IMR-90 (cell line): ENCODE measurements at regions of chr12 and their contacts with region 1.

Region 1: GRCh38 chr12:12171991-12172521 is 94.8 kb downstream of the LRP6 start:
- DNase-seq: peak; percentile 21
- ATAC-seq: no peak
- H3K4me3 ChIP-seq: no peak overlapping the region
- H3K27ac ChIP-seq: no peak overlapping the region
- H3K4me1 ChIP-seq: no peaks in the 10 kb centered on the region; the same call in 1 of the 2 replicates
- H3K27me3 ChIP-seq: no peaks in the 10 kb centered on the region
- CTCF ChIP-seq: no peak
- POLR2A ChIP-seq: no peak
- RAD21 ChIP-seq: no peak

Region 2: DNA sequence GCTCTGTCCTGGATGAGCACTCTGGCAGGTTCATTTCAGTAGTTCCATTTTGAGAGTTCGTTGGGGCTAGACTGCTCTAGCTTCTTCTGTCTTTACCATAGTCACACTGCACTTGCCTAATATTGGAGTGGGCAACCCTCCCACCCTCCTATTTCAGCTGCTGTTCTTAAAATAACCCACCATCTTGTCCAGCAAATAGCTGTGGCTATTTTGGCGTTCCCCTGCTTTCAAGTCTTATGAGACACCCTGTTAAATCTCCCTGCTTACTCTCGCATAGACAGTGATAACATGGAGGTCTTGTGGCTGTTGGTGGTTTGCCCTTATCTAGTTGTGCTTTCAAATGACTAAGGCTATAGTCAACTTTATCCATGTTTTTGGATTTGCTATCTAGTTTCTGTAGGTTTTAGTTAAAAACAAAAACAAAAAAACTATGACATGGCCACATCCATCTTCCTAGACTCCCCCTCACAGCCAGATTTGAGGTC is 29.3 kb after region 1 on chr12:
- CTCF ChIA-PET with region 1: no interaction called
- POLR2A ChIA-PET with region 1: no interaction called
- dilution Hi-C with region 1: no loop called
- in situ Hi-C with region 1: no loop called
- intact Hi-C with region 1: loop called (anchors 1 kb)
- DNase-seq: peak; percentile 65
- ATAC-seq: no peak
- H3K4me3 ChIP-seq: no peak overlapping the region
- H3K27ac ChIP-seq: no peak overlapping the region
- H3K4me1 ChIP-seq: no peaks in the 10 kb centered on the region
- H3K27me3 ChIP-seq: no peaks in the 10 kb centered on the region
- CTCF ChIP-seq: no peak
- POLR2A ChIP-seq: no peak
- RAD21 ChIP-seq: no peak

Region 3: DNA sequence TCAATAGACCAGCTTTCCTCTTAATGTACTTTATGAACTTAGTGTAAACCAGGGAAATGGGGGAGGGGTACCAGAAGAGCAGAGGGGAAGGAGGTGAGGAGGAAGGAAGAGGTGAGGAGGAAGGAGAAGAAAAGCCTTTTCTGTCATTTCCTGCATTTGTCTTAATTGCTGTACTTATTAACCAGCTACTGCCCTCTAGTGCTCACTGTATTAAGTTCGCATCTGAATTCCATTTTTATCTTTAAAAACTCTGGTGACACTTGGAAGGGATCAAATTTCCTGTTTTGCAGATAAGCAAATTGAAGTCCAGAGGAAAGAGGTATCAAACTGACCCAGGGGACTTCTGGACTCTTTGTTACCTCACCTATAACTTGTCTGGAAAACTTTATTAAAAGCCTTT is 155.7 kb after region 1 on chr12:
- CTCF ChIA-PET with region 1: no interaction called
- POLR2A ChIA-PET with region 1: no interaction called
- dilution Hi-C with region 1: no loop called
- in situ Hi-C with region 1: no loop called
- intact Hi-C with region 1: loop called (anchors 10 kb)
- DNase-seq: peak; percentile 73
- ATAC-seq: peak; percentile 65
- H3K4me3 ChIP-seq: no peak overlapping the region
- H3K27ac ChIP-seq: no peak overlapping the region
- H3K4me1 ChIP-seq: peaks cover 2% of the 10 kb centered on the region; the same call in 1 of the 2 replicates
- H3K27me3 ChIP-seq: 0 out of 2 replicates have a peak, but pooled peaks cover 2% of the 10 kb centered on the region
- CTCF ChIP-seq: peak; percentile 80
- POLR2A ChIP-seq: no peak
- RAD21 ChIP-seq: peak; percentile 82